ENCODE measurements at regions of chr2 and their contacts with region 1.

Region 1: DNA sequence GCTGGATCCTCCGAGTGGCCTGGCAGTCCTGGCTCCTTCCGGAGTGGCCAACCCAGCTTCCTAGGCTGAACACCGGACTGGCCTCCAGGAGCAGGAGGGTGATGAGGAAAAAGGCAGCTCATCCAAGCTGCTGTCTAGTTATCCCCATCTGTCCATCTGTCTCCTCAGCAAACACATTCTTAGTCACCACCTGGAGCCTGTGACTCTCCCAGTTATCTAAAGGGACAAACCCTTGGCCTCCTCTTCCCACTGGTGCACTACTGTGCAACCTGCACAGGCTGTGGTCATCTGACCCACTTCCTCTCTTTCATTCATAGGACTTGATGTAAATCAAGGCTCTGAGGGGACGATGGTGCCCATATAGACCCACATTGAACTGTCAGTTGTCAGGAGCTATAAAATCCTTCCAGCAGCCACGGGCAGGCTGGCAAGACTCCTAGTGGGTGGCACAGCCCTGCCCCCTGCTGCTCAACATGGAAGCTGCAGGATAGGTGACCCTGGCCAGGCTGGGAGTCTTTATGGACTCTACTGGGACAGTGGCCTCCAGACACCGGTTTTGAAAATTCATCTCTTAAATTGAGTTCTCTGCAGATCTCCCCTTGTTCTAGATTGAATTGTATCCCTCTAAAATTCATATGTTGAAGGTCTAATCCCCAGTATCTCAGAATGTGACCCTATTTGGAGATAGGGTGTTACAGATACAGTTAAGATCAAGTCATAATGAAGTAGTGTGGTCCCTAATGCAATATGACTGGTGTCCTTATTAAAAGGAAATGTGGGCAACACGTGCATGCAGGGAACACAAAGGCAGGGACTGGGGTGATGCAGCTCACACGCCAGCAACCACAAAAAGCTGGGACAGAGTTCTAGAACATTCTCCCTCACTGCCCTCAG is 29.3 kb upstream of the DUSP2 start:
- DNase-seq: peak; percentile 71
- H3K4me3 Mint-ChIP-seq: peak overlapping the region; percentile 7
- H3K27ac Mint-ChIP-seq: no peak overlapping the region
- H3K4me1 Mint-ChIP-seq: peaks cover 15% of the 10 kb centered on the region
- H3K27me3 Mint-ChIP-seq: peaks cover 1% of the 10 kb centered on the region

Region 2: GRCh38 chr2:96024336-96025193 is 149.9 kb before region 1 on chr2:
- intact Hi-C with region 1: loop called (anchors 10 kb)
- DNase-seq: no peak
- H3K4me3 Mint-ChIP-seq: no peak overlapping the region
- H3K27ac Mint-ChIP-seq: no peak overlapping the region
- H3K4me1 Mint-ChIP-seq: peaks cover 3% of the 10 kb centered on the region
- H3K27me3 Mint-ChIP-seq: no peaks in the 10 kb centered on the region

Region 3: GRCh38 chr2:96065381-96065930 is 109.0 kb before region 1 on chr2:
- intact Hi-C with region 1: no loop called
- DNase-seq: no peak
- H3K4me3 Mint-ChIP-seq: no peak overlapping the region
- H3K27ac Mint-ChIP-seq: no peak overlapping the region
- H3K4me1 Mint-ChIP-seq: peaks cover 2% of the 10 kb centered on the region
- H3K27me3 Mint-ChIP-seq: no peaks in the 10 kb centered on the region

Region 4: GRCh38 chr2:96138179-96139145 is 36.0 kb before region 1 on chr2 and contains the start of gene ASTL:
- intact Hi-C with region 1: loop called (anchors 1 kb)
- DNase-seq: peak; percentile 51
- H3K4me3 Mint-ChIP-seq: no peak within 1 kb of the TSS
- H3K27ac Mint-ChIP-seq: no peak within 1 kb of the TSS
- H3K4me1 Mint-ChIP-seq: peaks cover 13% of the 10 kb centered on the region
- H3K27me3 Mint-ChIP-seq: no peaks in the 10 kb centered on the region
- total RNA-seq, gene ASTL: 1.3 and 1.5 TPM in 2 replicates

Measured in activated T-helper 2 cell treated with anti-CD3 and anti-CD28 coated beads, Interferon-gamma antibody, Interleukin-2, Interleukin-4, amounts not matched to agents 10 μg/mL and 5 μg/mL and 100 μg/mL, durations not matched to agents 14 hours and 24 hours and 36 hours (primary cell).